Endothelial cell of umbilical vein (primary cell): ENCODE measurements at regions of chr5 and their contacts with region 1.

Region 1: DNA sequence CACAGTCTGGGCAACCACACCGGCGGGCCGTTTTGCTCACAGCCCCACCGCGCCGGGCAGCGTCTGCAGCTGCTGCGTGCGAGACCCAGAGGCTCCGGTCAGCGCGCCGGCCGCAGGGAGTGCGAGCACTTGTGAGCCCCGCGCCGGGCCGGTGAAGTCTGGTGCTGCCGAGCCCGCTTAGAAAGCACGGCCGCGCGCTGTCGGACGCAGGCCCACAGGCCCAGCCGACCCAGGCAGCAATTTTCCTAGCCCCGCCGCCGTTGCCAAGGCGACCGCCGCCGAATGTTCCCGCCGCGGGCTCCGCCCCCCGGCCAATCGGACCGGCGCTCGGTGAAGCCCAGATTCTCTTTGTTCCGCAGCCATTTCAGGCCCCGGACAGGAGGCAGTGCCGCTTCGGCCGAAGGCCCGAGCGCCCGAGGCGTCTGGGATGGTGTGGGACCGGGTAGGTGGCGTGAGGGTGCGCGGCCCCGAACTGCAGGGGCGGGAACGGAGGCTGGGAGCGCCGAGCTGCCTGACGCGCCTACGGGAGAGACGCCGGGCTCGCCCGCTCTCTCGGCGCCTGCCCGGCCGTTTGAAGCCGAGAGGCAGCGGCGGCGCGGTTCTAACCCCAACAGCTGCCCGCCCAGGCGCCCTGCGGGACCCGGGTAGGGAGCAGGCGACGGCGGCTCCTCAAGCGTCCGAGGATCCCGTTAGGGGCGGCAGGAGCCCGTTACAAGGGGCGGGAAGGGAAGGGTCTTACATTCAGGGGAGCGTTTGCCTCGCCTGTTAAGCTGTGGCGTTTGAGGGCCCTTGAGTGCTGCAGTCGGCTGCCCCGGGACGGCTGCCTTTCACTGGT is at the start of gene TNPO1:
- DNase-seq: peak; percentile 96
- H3K4me3 ChIP-seq: peak within 1 kb of the TSS; percentile 92 to 100 (median 100)
- H3K27ac ChIP-seq: peak within 1 kb of the TSS; percentile 98
- H3K4me1 ChIP-seq: peaks cover 43% of the 10 kb centered on the region
- H3K27me3 ChIP-seq: no peaks in the 10 kb centered on the region
- CTCF ChIP-seq: no peak
- POLR2A ChIP-seq: peak; percentile 99
- total RNA-seq, gene TNPO1: 242 and 298 TPM in 2 replicates

Region 2: DNA sequence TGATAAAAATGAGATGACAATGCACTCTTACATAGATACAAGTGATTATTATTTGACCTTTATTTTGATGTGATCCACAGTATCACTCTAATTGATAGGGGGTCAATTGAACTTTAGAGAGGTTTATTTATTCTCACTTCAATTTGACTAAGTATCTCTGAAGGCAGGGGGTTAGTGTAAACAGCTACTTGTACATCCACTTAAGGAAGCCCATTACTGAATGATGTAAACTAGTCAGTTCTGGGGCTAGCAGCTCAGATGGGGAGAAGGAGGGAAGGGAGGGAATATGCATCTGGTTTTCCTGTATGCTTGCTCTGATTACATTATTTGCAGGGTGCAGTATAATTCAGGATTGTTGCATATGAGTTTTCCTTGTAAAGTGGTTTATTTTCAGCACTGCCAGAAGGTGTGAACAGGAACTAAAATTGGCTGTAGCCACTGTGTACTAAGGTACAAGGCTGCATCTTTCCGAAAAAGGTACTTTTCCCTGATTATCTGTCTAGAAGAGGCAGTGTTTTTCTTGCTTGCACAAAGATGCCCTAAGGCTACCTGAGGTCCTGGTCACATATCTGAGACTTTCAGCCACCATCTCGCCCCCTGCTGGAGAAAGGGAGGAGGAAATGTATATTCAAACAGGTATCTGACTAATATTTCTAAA is 547.6 kb before region 1 on chr5:
- CTCF ChIA-PET with region 1: no interaction called
- POLR2A ChIA-PET with region 1: no interaction called
- dilution Hi-C with region 1: no loop called
- intact Hi-C with region 1: no loop called
- DNase-seq: peak; percentile 70
- H3K4me3 ChIP-seq: no peak overlapping the region
- H3K27ac ChIP-seq: no peak overlapping the region
- H3K4me1 ChIP-seq: peaks cover 2% of the 10 kb centered on the region
- H3K27me3 ChIP-seq: no peaks in the 10 kb centered on the region
- CTCF ChIP-seq: peak; percentile 60 to 67
- POLR2A ChIP-seq: no peak

Region 3: GRCh38 chr5:72556351-72557166 is 260.0 kb before region 1 on chr5:
- CTCF ChIA-PET with region 1: interaction called, 8 read pairs
- POLR2A ChIA-PET with region 1: interaction called, 5 read pairs
- dilution Hi-C with region 1: no loop called
- intact Hi-C with region 1: loop called (anchors 1 kb)
- DNase-seq: peak; percentile 85
- H3K4me3 ChIP-seq: peak overlapping the region in 1 of 3 experiments; percentile 4
- H3K27ac ChIP-seq: peak overlapping the region; percentile 97
- H3K4me1 ChIP-seq: peaks cover 83% of the 10 kb centered on the region
- H3K27me3 ChIP-seq: no peaks in the 10 kb centered on the region
- CTCF ChIP-seq: no peak
- POLR2A ChIP-seq: peak; percentile 92

Region 4: DNA sequence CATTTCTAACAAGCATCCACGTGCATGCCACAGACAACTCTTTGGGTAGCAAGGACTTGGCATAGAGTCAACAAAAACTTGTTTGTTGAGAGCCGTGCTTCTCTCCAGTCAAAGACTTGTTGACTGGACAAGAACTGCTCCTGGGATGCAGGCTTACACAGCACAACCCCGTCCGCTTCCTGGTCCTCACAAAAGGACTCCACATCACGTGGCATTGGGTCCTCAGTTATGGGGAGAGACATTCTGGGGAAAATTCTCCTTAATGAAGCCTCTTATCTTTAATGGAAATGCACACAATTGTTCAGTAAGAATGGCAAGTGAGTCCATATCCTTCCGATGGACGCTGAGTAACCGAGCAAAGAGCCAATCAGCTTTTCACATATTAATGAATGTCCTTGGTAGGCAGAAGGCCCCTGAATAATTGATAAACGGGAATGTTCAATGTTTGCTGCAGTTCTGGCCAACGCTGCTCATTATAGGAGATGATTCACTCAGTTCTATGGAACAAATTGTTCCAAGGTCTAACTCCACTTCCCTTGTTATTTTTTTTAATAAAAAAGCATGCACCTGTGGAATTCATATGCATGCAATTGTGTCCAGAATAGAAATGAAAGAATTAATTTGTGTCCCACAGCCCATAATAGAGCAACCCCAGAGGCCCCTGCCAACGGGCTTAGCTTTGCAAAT is 212.3 kb before region 1 on chr5:
- CTCF ChIA-PET with region 1: interaction called, 134 read pairs
- POLR2A ChIA-PET with region 1: interaction called, 4 read pairs
- dilution Hi-C with region 1: loop called (anchors 25 kb)
- intact Hi-C with region 1: no loop called
- DNase-seq: peak; percentile 99
- H3K4me3 ChIP-seq: no peak overlapping the region
- H3K27ac ChIP-seq: peak overlapping the region; percentile 97
- H3K4me1 ChIP-seq: peaks cover 64% of the 10 kb centered on the region
- H3K27me3 ChIP-seq: no peaks in the 10 kb centered on the region
- CTCF ChIP-seq: no peak
- POLR2A ChIP-seq: peak; percentile 25

Region 5: DNA sequence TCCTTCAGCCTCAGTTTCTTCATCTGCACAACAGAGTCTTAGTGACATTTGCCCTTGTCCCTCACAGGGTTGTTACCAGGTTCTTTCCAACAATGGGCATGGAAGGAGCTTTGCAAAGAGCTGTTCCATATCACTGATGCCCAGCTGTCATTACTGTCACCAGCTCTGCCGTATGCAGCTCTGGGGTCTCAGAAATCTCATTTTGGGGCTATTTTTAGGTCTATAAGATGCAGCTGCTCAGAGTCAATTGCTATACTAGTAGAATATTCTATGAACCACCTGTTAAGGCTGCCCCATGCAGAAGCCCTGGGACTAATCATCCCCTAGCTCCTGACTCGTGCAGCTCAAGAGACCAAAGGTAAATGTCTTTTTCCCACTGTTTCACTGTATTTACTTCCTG is 105.2 kb before region 1 on chr5:
- CTCF ChIA-PET with region 1: no interaction called
- POLR2A ChIA-PET with region 1: no interaction called
- dilution Hi-C with region 1: no loop called
- intact Hi-C with region 1: no loop called
- DNase-seq: no peak
- H3K4me3 ChIP-seq: no peak overlapping the region
- H3K27ac ChIP-seq: no peak overlapping the region
- H3K4me1 ChIP-seq: no peaks in the 10 kb centered on the region
- H3K27me3 ChIP-seq: peaks cover 4 to 9% of the 10 kb centered on the region in 2 experiments
- CTCF ChIP-seq: no peak
- POLR2A ChIP-seq: no peak

Region 6: GRCh38 chr5:72733810-72734209 is 82.7 kb before region 1 on chr5:
- CTCF ChIA-PET with region 1: no interaction called
- POLR2A ChIA-PET with region 1: no interaction called
- dilution Hi-C with region 1: no loop called
- intact Hi-C with region 1: no loop called
- DNase-seq: no peak
- H3K4me3 ChIP-seq: no peak overlapping the region
- H3K27ac ChIP-seq: no peak overlapping the region
- H3K4me1 ChIP-seq: no peaks in the 10 kb centered on the region
- H3K27me3 ChIP-seq: no peaks in the 10 kb centered on the region
- CTCF ChIP-seq: no peak
- POLR2A ChIP-seq: no peak

Region 7: DNA sequence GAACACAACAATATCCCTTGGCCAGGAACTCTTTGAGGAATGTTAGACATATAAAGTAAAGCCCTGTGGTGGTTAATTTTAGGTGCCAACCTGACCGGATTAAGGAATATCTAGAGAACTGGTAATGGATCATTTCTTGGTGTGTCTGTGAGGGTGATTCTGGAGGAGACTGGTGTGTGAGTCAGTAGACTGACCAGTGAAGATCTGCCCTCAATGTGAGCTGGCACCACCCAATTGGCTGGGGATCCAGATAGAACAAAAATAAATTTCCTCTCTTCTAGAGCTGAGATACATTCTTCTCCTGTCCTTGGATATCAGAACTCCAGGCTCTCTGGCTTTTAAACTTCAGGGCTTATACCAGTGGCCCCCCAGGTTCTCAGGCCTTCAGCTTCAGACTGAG is 56.3 kb before region 1 on chr5:
- CTCF ChIA-PET with region 1: no interaction called
- POLR2A ChIA-PET with region 1: no interaction called
- dilution Hi-C with region 1: no loop called
- intact Hi-C with region 1: no loop called
- DNase-seq: no peak
- H3K4me3 ChIP-seq: no peak overlapping the region
- H3K27ac ChIP-seq: no peak overlapping the region
- H3K4me1 ChIP-seq: no peaks in the 10 kb centered on the region
- H3K27me3 ChIP-seq: no peaks in the 10 kb centered on the region
- CTCF ChIP-seq: no peak
- POLR2A ChIP-seq: no peak

Region 8: GRCh38 chr5:72799721-72800120 is 16.8 kb before region 1 on chr5:
- CTCF ChIA-PET with region 1: interaction called, 16 read pairs
- POLR2A ChIA-PET with region 1: no interaction called
- dilution Hi-C with region 1: no loop called
- intact Hi-C with region 1: no loop called
- DNase-seq: peak; percentile 93
- H3K4me3 ChIP-seq: no peak overlapping the region
- H3K27ac ChIP-seq: peak overlapping the region; percentile 8
- H3K4me1 ChIP-seq: peaks cover 11% of the 10 kb centered on the region
- H3K27me3 ChIP-seq: no peaks in the 10 kb centered on the region
- CTCF ChIP-seq: no peak
- POLR2A ChIP-seq: no peak

Region 9: DNA sequence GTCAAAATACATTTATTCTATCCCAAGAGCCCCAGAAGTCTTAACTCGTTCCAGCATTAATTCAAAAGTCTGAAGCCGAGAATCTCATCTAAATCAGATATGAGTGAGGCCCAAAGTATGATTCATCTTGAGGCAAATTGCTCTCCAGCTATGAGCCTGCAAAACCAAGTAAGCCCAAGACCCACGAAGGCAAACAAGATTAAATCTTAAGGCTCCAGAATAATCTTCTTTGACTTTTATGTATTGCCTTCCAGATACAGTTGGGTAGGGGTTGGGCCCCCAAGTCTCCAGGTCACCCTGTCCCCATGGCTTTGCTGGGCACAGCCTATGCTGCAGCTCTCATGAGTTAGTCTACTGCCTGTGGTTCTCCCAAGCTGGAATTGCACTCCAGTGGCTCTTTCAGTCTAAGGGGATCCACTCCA is 19.2 kb after region 1 on chr5:
- CTCF ChIA-PET with region 1: interaction called, 37 read pairs
- POLR2A ChIA-PET with region 1: interaction called, 3 read pairs
- dilution Hi-C with region 1: no loop called
- intact Hi-C with region 1: no loop called
- DNase-seq: no peak
- H3K4me3 ChIP-seq: no peak overlapping the region
- H3K27ac ChIP-seq: no peak overlapping the region
- H3K4me1 ChIP-seq: peaks cover 30% of the 10 kb centered on the region
- H3K27me3 ChIP-seq: no peaks in the 10 kb centered on the region
- CTCF ChIP-seq: no peak
- POLR2A ChIP-seq: no peak

Region 10: GRCh38 chr5:72847989-72848473 is 31.5 kb after region 1 on chr5:
- CTCF ChIA-PET with region 1: interaction called, 37 read pairs
- POLR2A ChIA-PET with region 1: interaction called, 4 read pairs
- dilution Hi-C with region 1: no loop called
- intact Hi-C with region 1: loop called (anchors 2 kb)
- DNase-seq: peak; percentile 93
- H3K4me3 ChIP-seq: peak overlapping the region; percentile 62 to 99 (median 97)
- H3K27ac ChIP-seq: peak overlapping the region; percentile 90
- H3K4me1 ChIP-seq: peaks cover 58% of the 10 kb centered on the region
- H3K27me3 ChIP-seq: no peaks in the 10 kb centered on the region
- CTCF ChIP-seq: no peak
- POLR2A ChIP-seq: peak; percentile 92